ENCODE measurements at regions of chr12 and their contacts with region 1.

Region 1: GRCh38 chr12:48890657-48891418 is 25.2 kb upstream of the RND1 start:
- DNase-seq: peak; percentile 77 to 94 (median 92)
- ATAC-seq: peak; percentile 98
- H3K4me3 ChIP-seq: peak overlapping the region; percentile 46
- H3K27ac ChIP-seq: no peak overlapping the region
- H3K4me1 ChIP-seq: no peaks in the 10 kb centered on the region
- H3K27me3 ChIP-seq: no peaks in the 10 kb centered on the region

Region 2: DNA sequence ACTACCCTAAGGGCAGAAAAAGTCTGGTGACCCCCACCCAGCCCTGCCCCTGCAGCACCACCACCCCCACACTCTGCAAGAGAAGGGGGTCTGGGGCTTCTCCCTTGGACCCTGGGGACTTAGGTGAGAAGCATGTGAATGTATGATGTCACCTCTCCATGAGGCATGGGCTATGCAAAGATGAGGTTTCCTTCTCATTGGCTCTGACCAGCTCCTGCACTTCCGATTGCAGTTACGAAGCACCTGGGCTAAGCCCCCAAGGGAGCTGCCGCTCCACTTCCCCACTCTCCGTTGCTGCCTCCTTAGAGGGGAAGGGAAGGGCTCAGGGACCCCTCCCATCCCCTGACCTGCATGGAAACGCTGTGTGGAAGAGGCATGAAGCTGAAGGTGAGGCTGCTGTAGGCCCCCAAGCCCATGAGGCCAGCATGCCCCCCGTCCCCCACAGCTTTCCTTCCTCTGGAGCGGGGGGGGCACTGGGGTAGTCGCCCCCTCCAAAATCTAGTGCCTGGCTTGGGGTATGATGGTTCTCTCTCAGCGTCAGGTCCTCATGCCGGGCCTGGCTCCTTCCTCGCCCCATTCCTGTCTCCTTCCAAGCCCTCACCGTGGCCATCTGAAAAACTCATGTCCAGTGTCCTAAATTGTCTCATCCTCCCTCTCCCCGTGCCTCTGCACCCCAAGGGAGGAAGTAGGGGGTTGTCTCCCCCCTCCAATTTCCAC is 33.4 kb before region 1 on chr12:
- intact Hi-C with region 1: loop called (anchors 2 to 5 kb)
- DNase-seq: no peak
- ATAC-seq: no peak
- H3K4me3 ChIP-seq: no peak overlapping the region
- H3K27ac ChIP-seq: no peak overlapping the region
- H3K4me1 ChIP-seq: no peaks in the 10 kb centered on the region
- H3K27me3 ChIP-seq: no peaks in the 10 kb centered on the region

Measured in right cardiac atrium (tissue), 5 donors.